ENCODE measurements at regions of chr2 and their contacts with region 1.

Region 1: DNA sequence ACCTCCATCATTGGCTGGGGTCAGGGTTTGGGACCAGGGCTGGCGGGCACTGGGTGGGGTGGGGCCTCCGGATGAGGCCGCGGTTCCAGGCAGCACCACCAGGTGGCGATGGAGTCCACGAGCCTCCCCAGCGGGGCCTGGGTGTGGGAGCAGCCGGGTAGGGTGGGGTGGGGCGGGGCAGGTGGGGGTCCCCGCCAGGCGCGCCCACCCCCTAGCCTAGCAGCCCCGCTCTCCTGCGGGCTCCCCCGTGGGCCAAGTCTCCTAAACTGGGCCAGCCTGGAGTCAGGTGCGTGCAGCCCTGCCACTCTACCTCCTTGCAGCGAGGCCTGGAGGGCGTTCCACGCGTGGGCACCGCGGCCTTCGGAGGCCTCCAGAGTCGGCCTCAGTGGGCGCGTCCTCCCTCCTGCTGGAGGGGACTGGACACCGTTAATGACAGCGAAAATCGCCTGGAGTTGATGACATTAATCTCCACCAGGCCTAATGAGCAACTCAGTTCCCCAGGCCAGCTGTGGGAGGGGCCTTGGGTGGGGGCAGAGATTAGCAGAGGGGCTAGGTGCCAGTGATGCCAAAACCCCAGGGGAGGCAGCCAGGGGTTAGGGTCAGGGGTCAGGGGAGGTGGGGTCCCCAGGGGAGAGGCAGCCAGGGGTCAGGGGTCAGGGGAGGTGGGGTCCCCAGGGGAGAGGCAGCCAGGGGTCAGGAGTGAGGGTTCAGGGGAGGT is 187.6 kb downstream of the TWIST2 start:
- DNase-seq: peak; percentile 81
- ATAC-seq: peak; percentile 95
- H3K4me3 Mint-ChIP-seq: no peak overlapping the region
- H3K27ac Mint-ChIP-seq: no peak overlapping the region
- H3K4me1 Mint-ChIP-seq: no peaks in the 10 kb centered on the region
- H3K27me3 Mint-ChIP-seq: peaks cover 9% of the 10 kb centered on the region

Region 2: GRCh38 chr2:239106314-239106908 is 70.9 kb after region 1 on chr2:
- CTCF ChIA-PET with region 1: no interaction called
- POLR2A ChIA-PET with region 1: no interaction called
- intact Hi-C with region 1: loop called in 1 of 2 experiments (anchors 1 kb)
- DNase-seq: peak; percentile 48
- ATAC-seq: peak; percentile 39
- H3K4me3 Mint-ChIP-seq: no peak overlapping the region
- H3K27ac Mint-ChIP-seq: no peak overlapping the region
- H3K4me1 Mint-ChIP-seq: no peaks in the 10 kb centered on the region
- H3K27me3 Mint-ChIP-seq: no peaks in the 10 kb centered on the region

Region 3: GRCh38 chr2:239747274-239747673 is 711.8 kb after region 1 on chr2:
- CTCF ChIA-PET with region 1: no interaction called
- POLR2A ChIA-PET with region 1: no interaction called
- intact Hi-C with region 1: loop called in 1 of 2 experiments (anchors 10 kb)
- DNase-seq: no peak
- ATAC-seq: no peak
- H3K4me3 Mint-ChIP-seq: no peak overlapping the region
- H3K27ac Mint-ChIP-seq: no peak overlapping the region
- H3K4me1 Mint-ChIP-seq: peaks cover 10% of the 10 kb centered on the region
- H3K27me3 Mint-ChIP-seq: no peaks in the 10 kb centered on the region

Region 4: DNA sequence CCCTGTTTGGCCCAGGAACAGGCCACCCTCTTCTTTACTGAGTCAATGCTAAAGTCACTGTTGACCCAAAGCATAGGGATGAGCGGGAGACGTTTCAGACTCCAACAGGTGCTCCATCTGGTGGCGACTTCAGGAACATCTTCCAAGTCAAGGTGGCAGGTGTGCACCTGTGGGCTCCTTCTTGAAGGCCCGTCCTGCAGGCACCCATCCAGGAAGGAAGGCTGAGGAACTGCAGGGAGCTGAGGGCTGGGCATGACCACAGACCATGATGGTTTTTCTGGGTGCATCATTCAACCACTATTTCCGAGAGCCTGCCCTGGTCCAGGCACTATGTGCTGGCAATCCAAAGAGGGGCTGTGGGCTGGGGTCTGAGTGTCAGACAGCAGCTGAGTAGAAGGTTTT is 846.8 kb after region 1 on chr2:
- CTCF ChIA-PET with region 1: interaction called, 6 read pairs
- POLR2A ChIA-PET with region 1: no interaction called
- intact Hi-C with region 1: loop called (anchors 1 kb)
- DNase-seq: peak; percentile 77
- ATAC-seq: peak; percentile 75
- H3K4me3 Mint-ChIP-seq: no peak overlapping the region
- H3K27ac Mint-ChIP-seq: no peak overlapping the region
- H3K4me1 Mint-ChIP-seq: peaks cover 4% of the 10 kb centered on the region
- H3K27me3 Mint-ChIP-seq: no peaks in the 10 kb centered on the region

Region 5: DNA sequence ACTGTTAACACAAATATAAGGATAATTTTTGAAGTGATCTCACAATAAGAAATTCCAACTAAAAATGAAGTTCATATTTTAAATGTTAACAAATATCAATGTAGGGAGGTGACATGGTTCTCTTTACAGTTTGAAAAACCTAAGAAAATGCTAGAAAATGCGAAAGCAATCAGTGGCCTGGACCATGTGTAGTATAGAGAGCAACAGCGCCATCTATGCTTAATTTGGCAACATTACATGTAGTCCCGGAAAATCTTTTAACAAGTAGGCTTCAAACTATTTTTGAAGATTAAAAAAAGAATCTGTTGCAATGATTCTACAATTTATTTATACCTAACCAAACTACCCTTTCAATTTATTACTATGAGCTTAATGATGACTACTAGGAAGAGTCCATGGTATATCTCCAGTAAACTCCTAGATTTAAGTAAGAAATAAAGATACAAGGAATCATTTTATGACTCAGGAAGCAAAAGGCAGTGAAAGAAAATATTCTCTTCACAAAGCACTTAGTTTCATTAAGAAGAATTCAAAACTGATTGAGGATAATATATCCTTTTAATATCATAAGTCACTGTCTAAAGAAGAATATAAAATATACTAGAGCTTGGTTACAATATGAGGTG is 956.3 kb after region 1 on chr2:
- CTCF ChIA-PET with region 1: interaction called, 3 read pairs
- POLR2A ChIA-PET with region 1: no interaction called
- intact Hi-C with region 1: loop called in 1 of 2 experiments (anchors 5 kb)
- DNase-seq: no peak
- ATAC-seq: peak; percentile 71
- H3K4me3 Mint-ChIP-seq: no peak overlapping the region
- H3K27ac Mint-ChIP-seq: no peak overlapping the region
- H3K4me1 Mint-ChIP-seq: no peaks in the 10 kb centered on the region
- H3K27me3 Mint-ChIP-seq: no peaks in the 10 kb centered on the region

Region 6: DNA sequence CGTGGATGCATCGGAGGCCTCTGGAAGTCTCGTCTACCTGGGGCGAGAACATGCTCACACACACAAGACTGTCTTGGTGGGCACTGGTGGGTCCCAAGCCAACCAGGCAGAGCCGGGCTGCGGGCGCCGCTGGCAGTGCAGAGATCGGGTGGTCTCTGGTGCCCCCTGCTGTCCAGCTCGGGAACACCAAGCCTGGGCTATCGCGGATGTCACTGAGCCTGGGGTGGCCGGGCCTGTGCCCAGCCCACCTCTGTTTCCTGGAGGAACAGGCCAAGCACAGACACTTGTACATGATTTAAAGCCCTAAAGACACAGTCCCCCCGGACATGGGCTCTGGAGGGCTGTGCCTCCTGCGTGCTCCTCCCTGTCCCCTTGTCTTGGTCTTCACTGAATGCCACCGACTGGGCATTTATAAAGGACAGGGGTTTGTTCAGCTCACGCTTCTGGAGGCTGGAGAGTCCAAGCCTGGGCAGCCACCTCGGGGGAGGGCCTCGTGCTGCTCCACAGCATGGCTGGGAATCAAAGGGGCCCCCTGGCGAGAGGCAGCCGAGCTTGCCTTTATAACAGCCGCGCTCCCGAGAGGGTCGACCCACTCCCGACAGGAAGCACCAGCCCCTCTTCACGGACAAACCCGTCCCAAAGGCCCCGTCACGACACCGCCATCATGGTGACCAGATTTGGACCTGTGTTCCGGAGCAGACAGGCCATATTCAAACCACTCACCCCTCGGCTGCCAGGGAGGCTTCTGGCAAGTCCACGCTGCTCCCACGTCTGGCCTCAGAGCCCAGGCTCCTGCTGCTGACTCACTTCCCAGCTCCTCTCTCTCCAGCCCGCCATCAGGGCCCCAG is 1108.5 kb after region 1 on chr2:
- CTCF ChIA-PET with region 1: no interaction called
- POLR2A ChIA-PET with region 1: no interaction called
- intact Hi-C with region 1: loop called in 1 of 2 experiments (anchors 1 kb)
- DNase-seq: peak; percentile 88
- ATAC-seq: peak; percentile 96
- H3K4me3 Mint-ChIP-seq: no peak overlapping the region
- H3K27ac Mint-ChIP-seq: no peak overlapping the region
- H3K4me1 Mint-ChIP-seq: no peaks in the 10 kb centered on the region
- H3K27me3 Mint-ChIP-seq: peaks cover 4% of the 10 kb centered on the region

Measured in activated CD4-positive, alpha-beta T cell treated with anti-CD3 and anti-CD28 coated beads for 36 hours (primary cell).